Naive thymus-derived CD4-positive, alpha-beta T cell (primary cell): ENCODE measurements at regions of chr3 and their contacts with region 1.

Region 1: GRCh38 chr3:72782521-72782920 is 65.7 kb downstream of the SHQ1 start:
- DNase-seq: no peak
- ATAC-seq: no peak
- H3K4me3 ChIP-seq: no peak overlapping the region
- H3K4me3 Mint-ChIP-seq: no peak overlapping the region
- H3K27ac ChIP-seq: no peak overlapping the region
- H3K27ac Mint-ChIP-seq: peak overlapping the region in 2 of 9 donors; percentile 24 to 32
- H3K4me1 ChIP-seq: no peaks in the 10 kb centered on the region
- H3K4me1 Mint-ChIP-seq: peaks cover 0 to 18% (median 10%) of the 10 kb centered on the region in 7 donors
- H3K27me3 ChIP-seq: no peaks in the 10 kb centered on the region
- H3K27me3 Mint-ChIP-seq: no peaks in the 10 kb centered on the region

Region 2: GRCh38 chr3:72797773-72798543 is 15.4 kb after region 1 on chr3:
- CTCF ChIA-PET with region 1: interaction called, 4 read pairs
- POLR2A ChIA-PET with region 1: interaction called, 4 read pairs
- intact Hi-C with region 1: loop called in 1 of 2 experiments (anchors 2 kb)
- DNase-seq: no peak
- ATAC-seq: no peak
- H3K4me3 ChIP-seq: no peak overlapping the region
- H3K4me3 Mint-ChIP-seq: no peak overlapping the region
- H3K27ac ChIP-seq: no peak overlapping the region
- H3K27ac Mint-ChIP-seq: peak overlapping the region in 2 of 9 donors; percentile 22 to 44
- H3K4me1 ChIP-seq: no peaks in the 10 kb centered on the region
- H3K4me1 Mint-ChIP-seq: peaks cover 0 to 46% (median 16%) of the 10 kb centered on the region in 7 donors
- H3K27me3 ChIP-seq: no peaks in the 10 kb centered on the region
- H3K27me3 Mint-ChIP-seq: no peaks in the 10 kb centered on the region